Activated CD8-positive, alpha-beta memory T cell treated with anti-CD3 and anti-CD28 coated beads, Interleukin-2, amount 10 ng/mL, durations not matched to agents 7 days and 5 days (primary cell): ENCODE measurements at regions of chr12 and their contacts with region 1.

Region 1: DNA sequence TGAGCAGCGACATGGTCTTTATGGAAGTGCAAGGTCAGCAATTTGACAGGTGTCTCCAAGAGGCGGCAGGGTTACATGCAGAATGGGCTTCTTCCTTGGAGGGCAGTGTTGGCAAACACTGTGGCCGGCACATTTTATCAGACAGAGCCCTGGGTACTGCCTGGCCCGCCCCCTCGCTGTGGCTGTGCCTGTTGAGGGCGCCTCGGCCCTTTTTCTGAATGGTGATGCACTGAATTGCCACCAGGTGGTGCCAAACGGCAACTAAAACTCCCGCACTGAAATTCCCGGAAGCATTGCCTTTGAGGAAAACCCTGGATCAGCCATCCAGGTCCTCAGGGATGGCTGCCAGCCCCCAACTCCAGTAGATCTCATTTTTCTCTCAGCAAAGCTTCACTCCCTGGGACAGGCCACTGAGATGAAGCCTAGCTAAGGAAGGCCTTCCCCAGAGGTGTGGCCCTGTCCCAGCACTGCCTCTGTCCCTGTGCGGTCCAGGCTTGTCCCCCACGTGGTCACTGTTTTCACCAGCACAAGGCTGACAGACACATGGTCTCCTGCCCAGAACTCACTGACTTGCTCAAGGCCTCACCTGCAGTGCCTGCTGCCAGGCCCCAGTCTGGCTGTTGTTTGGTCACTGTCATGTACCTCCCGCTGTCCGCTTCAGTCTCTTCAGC is 73.6 kb downstream of the TESC start:
- DNase-seq: peak; percentile 65
- ATAC-seq: peak; percentile 81
- H3K4me3 Mint-ChIP-seq: no peak overlapping the region
- H3K27ac Mint-ChIP-seq: peak overlapping the region; percentile 77
- H3K4me1 Mint-ChIP-seq: peaks cover 6% of the 10 kb centered on the region
- H3K27me3 Mint-ChIP-seq: no peaks in the 10 kb centered on the region

Region 2: DNA sequence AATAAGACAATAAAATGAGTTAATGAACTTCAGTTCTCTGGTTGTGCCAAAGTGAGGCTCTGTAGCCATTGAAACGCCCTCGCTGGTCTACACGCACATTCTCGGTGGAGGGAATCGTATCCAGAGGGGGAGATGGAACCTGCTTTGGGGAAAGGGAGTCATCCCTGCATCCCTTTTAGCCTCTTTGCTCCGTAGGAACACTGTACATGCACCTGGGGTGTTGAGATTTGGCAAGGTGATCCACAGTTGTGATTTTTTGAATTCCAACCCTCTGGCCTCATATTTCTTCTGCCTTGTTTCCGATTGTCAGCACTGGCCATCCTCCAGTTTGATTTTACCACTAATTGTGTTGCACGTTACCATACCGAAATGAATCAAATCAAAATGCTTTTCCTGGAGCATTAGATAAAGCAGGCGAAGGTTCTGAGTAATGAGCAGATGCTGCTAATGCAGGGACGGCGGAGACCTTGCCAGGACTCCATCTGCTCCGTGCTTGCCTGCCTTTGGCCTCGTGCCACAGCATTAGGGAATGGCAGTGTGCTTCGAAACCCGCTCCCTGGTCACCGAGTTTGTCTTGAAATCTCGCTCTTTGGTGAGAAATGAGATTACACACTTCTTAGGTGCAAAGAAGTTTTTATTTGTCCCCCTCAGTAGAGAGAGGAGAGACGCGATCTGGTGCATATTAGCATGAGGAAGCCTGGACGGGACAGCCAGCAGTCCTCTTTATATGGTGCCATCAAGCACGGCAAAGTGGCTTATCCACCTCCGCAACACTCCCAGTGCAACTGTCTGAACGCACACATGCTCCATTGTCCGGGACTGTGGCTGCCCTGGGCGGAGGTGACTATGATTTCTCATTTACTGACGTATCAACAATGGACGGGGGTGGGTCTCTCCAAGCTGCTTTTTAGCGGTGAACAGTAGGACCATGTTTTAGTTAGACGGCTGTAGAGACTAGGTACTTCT is 55.7 kb before region 1 on chr12:
- CTCF ChIA-PET with region 1: no interaction called
- DNase-seq: no peak
- ATAC-seq: no peak
- H3K4me3 Mint-ChIP-seq: no peak overlapping the region
- H3K27ac Mint-ChIP-seq: no peak overlapping the region
- H3K4me1 Mint-ChIP-seq: no peaks in the 10 kb centered on the region
- H3K27me3 Mint-ChIP-seq: no peaks in the 10 kb centered on the region

Region 3: GRCh38 chr12:117098361-117099217 is 73.0 kb after region 1 on chr12:
- CTCF ChIA-PET with region 1: interaction called, 10 read pairs
- DNase-seq: peak; percentile 62
- ATAC-seq: peak; percentile 50
- H3K4me3 Mint-ChIP-seq: peak overlapping the region; percentile 78
- H3K27ac Mint-ChIP-seq: peak overlapping the region; percentile 68
- H3K4me1 Mint-ChIP-seq: peaks cover 27% of the 10 kb centered on the region
- H3K27me3 Mint-ChIP-seq: peaks cover 26% of the 10 kb centered on the region

Region 4: DNA sequence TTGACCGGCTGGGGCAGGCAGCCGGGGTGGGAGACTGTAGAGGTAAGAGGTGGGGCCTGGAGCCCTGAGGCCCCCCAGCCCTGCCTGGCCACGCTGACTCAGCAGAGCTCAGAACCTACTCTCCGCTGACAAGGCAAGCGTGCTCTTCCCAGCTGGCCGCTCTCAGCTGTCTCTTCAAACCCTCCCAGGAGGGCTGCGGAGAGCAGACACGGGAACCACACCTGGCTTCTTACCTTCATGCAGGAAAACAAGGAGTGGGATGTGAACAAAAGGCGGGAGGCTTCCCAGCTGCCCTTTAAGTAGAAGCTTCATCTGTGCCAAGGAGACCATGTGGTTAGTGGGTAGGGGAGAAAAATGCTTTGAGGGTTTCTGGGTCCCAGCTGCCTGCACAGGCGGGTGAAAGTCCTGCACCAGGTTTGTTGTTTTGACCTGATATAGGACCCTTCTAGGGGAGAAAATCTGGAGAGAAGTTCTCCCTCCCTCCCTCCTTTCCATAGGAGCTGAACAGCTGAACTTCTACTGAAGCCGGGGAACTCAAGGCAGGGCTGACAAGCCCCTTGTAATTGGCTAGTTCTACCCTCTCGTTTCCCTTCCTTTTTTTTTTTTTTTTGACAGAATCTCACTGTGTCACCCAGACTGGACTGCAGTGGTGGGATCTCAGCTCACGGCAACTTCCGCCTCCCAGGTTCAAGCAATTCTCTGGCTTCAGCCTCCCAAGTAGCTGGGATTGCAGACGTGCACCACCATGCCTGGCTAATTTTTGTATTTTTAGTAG is 86.4 kb after region 1 on chr12:
- CTCF ChIA-PET with region 1: interaction called, 19 read pairs
- DNase-seq: no peak
- ATAC-seq: no peak
- H3K4me3 Mint-ChIP-seq: no peak overlapping the region
- H3K27ac Mint-ChIP-seq: no peak overlapping the region
- H3K4me1 Mint-ChIP-seq: no peaks in the 10 kb centered on the region
- H3K27me3 Mint-ChIP-seq: peaks cover 15% of the 10 kb centered on the region

Region 5: DNA sequence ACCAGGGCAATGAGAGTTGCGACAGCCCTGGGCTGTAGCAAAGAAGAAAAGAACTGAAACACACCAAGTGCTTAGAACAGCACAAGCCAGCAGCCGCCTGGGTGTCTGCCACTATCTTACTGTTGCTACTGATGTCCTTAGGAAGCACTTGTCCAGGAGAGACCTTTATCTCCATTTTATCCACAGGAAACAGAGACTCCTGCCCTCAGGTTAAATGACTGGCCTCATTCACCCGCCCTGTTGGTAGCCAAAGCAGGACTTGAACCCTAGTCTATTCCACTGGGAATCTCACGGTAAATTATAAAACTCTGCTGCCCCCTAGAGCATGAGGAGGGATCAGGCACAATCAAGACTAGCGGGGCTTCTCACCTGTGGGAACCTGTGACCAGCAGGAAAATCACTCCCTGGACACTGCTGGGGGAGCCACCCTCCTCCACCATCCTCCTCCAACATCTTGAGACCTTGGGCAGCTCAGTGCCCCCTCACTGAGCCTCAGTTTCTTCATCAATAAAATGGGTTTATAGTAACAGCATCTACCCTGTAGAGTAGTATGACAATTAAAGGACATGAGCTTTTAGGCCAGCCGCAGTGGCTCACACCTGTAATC is 94.1 kb after region 1 on chr12:
- CTCF ChIA-PET with region 1: interaction called, 125 read pairs
- DNase-seq: peak; percentile 51
- ATAC-seq: peak; percentile 73
- H3K4me3 Mint-ChIP-seq: no peak overlapping the region
- H3K27ac Mint-ChIP-seq: no peak overlapping the region
- H3K4me1 Mint-ChIP-seq: peaks cover 1% of the 10 kb centered on the region
- H3K27me3 Mint-ChIP-seq: no peaks in the 10 kb centered on the region

Region 6: GRCh38 chr12:117134059-117134458 is 108.4 kb after region 1 on chr12:
- CTCF ChIA-PET with region 1: interaction called, 16 read pairs
- DNase-seq: peak; percentile 81
- ATAC-seq: peak; percentile 87
- H3K4me3 Mint-ChIP-seq: peak overlapping the region; percentile 7
- H3K27ac Mint-ChIP-seq: peak overlapping the region; percentile 84
- H3K4me1 Mint-ChIP-seq: peaks cover 18% of the 10 kb centered on the region
- H3K27me3 Mint-ChIP-seq: no peaks in the 10 kb centered on the region